ENCODE measurements at regions of chr1 and their contacts with region 1.

Region 1: DNA sequence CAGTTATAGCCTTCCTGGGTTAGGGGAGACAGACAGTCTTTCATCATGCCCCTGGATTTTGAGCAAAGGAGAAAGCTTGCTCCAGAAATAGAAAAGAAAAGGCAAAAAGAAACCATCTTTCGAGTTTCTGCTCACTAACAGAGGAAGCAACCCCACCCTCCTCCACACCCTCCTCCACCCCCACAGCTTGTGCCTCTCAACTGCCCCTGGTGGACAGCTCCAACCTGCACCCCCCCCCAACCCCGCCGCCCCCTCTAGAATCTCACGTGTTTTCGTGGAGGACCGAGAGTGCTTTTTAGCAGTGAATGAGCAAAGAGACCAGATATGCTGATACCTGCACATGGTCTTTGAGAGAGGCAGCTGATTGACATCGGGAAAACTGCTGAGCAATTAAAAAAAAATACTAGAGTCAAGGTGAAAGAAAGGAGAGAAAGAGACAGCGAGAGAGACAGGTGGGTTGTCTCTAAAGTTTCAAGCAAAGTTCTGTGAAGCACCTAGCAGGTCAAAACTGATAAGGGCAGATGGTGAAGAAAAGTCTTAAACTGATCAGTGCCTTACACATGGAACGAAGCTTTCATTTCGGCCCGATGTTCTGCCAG is 358.3 kb downstream of the KIF26B start:
- DNase-seq: peak in 1 of 2 experiments; percentile 34
- H3K4me3 ChIP-seq: no peak overlapping the region
- H3K4me1 ChIP-seq: no peaks in the 10 kb centered on the region
- H3K27me3 ChIP-seq: peaks cover 2% of the 10 kb centered on the region; the same call in 1 of the 2 replicates

Region 2: DNA sequence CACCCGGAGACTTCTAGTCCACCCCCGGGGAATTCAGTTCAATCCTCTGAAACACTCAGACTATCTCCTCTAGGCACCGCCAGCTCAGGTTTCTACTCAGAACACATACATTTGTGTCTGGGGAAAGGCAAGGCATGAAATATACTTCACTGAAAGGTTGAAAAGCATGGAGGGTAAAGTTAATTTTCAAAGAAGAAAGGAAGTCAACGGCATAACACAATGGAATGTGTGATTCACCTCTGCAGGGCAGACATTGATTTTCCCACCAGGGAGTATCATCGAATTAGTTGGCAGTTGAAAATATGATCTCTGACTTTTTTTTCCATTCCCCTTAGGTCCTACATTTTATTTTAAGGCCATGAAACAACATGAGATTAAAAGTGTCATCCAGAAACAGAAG is 324.6 kb after region 1 on chr1:
- in situ Hi-C with region 1: no loop called
- DNase-seq: no peak
- H3K4me3 ChIP-seq: no peak overlapping the region
- H3K4me1 ChIP-seq: no peaks in the 10 kb centered on the region
- H3K27me3 ChIP-seq: no peaks in the 10 kb centered on the region

Region 3: DNA sequence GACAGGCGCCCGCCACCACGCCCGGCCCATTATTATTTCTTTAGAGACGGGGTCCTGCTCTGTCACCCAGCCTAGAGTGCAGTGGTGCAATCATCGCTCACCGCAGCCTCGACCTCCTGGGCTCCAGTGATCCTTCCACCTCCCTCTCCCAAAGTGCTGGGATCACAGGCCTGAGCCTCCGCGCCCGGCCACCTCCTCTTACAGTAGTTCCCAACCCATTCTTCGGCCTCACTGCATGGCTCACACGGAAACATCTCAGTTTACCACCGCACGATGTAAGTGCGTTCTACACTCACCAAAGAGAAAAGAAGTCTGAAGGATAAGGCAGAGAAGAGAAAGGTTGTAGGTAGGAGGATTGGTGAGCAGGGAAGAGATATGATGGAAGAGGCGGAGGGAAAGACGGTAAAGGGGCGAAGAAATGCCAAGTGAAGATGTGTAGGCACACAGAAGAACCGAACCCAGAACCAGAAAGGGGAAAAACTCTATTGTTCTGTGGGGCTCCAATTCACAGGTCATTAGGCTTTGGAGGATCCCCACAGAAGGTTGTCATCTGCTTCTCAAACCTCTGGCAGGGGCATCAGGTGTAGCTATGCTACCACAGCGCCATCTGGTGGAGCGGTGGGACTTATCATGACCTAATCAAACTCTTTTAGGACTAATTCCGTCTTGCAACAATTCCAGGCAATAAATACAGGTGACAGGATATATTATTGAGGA is 489.8 kb after region 1 on chr1:
- in situ Hi-C with region 1: loop called (anchors 25 kb)
- DNase-seq: peak; percentile 64 to 89
- H3K4me3 ChIP-seq: no peak overlapping the region
- H3K4me1 ChIP-seq: no peaks in the 10 kb centered on the region
- H3K27me3 ChIP-seq: no peaks in the 10 kb centered on the region

Measured in HAP-1 (cell line).